ENCODE measurements at regions of chr1 and their contacts with region 1.

Region 1: DNA sequence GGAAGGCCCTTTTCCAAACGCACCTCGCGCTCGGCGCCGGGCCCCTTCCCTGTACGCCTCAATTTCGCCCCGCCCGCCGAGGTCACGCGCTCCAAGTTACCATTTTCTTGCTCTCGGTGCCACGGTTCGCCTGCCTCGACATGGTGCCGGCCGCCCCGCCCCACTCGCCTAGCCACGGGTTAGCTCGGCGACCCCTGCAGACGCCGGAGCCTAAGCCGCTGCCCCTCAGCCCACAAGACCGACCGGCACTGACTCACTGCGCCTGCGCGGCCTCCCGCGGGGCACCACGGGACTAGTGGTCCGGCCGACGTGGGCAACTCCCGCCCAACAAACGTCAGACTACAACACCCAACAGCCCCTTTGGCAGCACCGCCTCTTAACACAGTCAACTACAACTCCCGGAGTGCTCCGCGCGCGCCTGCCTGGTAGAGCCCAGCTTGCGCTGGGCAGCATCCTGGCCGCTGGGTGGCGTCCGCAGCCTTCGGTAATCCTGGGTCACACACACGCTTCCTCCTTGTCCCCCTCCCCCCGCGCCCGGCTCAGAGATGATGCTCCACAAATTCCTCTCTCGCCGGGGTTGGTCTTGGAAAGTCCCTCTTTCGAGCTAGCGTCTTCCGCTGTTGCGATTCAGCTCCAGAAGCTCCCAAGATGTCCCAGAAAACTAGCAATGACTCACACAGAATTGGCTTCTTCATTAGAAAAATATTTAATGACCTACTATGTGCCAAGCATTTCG is at the start of gene TRAPPC3:
- DNase-seq: peak; percentile 100
- H3K4me3 Mint-ChIP-seq: peak within 1 kb of the TSS; percentile 98
- H3K27ac Mint-ChIP-seq: peak within 1 kb of the TSS; percentile 93
- H3K4me1 Mint-ChIP-seq: peaks cover 66% of the 10 kb centered on the region
- H3K27me3 Mint-ChIP-seq: no peaks in the 10 kb centered on the region
- total RNA-seq, gene TRAPPC3: 57.2 to 58.4 TPM

Region 2: GRCh38 chr1:36070349-36070748 is 79.1 kb before region 1 on chr1:
- CTCF ChIA-PET with region 1: no interaction called
- POLR2A ChIA-PET with region 1: no interaction called
- DNase-seq: no peak
- H3K4me3 Mint-ChIP-seq: no peak overlapping the region
- H3K27ac Mint-ChIP-seq: no peak overlapping the region
- H3K4me1 Mint-ChIP-seq: peaks cover 2% of the 10 kb centered on the region
- H3K27me3 Mint-ChIP-seq: no peaks in the 10 kb centered on the region

Region 3: DNA sequence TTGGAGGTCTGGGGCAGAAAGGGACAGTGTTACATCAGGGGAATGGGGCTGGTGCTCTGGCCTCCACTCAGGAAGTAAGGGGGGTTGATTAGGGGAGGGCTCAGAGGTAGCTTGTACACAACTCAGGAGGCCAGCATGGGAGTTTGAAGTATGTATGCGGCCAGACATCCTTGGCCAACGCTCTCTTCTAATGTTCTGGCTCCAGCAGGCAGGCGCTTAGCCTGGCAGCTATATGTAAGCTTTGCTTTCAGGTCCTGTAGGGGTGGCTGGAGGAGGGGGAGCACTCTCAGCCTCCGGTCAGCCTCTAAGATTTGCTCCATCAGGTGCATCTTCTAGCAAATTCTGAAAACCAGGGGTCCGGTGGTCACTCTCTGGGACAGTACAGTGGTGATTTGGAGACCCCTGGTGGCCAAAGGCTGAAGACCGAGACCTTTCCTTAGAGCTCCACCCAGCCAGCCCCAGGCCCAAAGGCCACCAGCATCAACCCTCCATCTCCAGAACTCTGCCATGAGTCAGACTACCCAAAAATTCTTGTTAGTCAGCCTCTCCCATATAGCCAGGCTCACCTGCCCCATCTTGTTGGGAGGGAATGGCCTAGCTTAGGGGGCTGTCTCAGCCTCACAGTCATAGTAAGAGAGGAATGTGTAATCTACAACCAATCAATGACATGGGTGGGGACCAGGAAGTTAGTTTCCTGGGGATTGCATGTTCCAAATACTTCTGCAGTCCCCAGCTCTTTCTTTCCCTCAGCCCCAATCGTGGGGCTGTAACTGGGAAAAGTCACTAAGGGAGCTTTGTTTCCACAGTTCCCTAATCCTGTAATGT is 14.7 kb before region 1 on chr1:
- CTCF ChIA-PET with region 1: interaction called, 22 read pairs
- POLR2A ChIA-PET with region 1: interaction called, 10 read pairs
- DNase-seq: peak; percentile 41
- H3K4me3 Mint-ChIP-seq: no peak overlapping the region
- H3K27ac Mint-ChIP-seq: no peak overlapping the region
- H3K4me1 Mint-ChIP-seq: peaks cover 8% of the 10 kb centered on the region
- H3K27me3 Mint-ChIP-seq: no peaks in the 10 kb centered on the region

Region 4: DNA sequence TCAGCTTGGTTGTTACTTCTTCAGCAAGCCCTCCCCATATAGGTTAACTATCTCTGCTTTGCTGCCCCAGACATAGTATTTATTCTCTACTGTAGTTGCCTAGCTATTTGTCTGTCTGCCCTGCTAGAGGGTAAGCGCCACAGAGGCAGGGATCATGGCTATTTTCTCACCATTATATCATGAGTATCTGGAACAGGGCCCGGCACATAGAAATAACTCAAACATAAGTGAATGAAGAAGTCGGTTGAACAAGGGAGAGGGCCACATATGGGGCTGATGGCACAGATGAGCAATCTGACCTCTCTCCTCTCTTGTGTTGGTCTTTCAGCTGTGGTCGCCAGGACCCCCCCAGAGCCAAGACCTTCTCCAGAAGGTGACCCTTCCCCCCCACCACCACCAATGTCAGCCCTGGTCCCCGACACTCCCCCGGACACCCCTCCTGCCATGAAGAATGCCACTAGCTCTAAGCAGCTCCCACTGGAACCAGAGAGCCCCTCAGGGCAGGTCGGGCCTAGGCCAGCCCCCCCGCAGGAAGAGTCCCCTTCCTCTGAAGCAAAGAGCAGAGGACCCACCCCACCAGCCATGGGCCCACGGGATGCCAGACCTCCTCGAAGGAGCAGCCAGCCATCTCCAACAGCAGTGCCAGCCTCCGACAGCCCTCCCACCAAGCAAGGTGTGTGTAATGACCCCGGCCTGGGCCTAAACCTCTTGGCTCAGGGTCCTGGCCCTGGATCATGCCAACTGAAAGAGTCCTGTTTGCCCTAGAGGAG is 21.4 kb after region 1 on chr1:
- CTCF ChIA-PET with region 1: interaction called, 4 read pairs
- POLR2A ChIA-PET with region 1: interaction called, 193 read pairs
- DNase-seq: no peak
- H3K4me3 Mint-ChIP-seq: no peak overlapping the region
- H3K27ac Mint-ChIP-seq: no peak overlapping the region
- H3K4me1 Mint-ChIP-seq: peaks cover 19% of the 10 kb centered on the region
- H3K27me3 Mint-ChIP-seq: no peaks in the 10 kb centered on the region

Region 5: DNA sequence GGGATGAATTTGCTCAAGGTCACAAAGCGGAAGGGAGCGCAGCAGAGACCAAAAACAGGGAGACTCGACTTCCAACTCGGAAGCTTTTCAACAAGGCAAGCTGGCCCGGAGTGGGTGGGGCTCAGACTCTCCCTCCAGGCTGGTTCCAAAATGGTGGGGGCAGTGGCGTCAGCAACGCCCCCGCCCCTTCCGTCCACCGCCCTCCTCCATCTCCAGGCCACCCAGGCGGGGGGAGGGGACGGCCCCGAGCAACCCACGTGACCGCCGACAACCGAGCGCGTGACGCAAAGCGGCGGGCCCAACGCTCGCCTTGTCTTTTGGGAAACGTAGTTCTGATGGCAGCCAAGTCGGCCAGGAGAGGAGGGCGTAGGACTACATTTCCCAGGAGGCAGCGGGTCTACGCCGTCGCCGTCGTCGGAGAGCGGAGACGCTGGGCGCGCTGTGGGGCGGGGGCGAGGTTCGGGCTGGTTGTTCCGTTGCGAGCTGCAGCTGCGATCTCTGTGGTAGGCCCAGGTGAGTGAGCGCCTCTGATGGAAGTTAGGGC is 74.7 kb after region 1 on chr1 and contains the start of gene THRAP3:
- CTCF ChIA-PET with region 1: interaction called, 46 read pairs
- POLR2A ChIA-PET with region 1: interaction called, 54 read pairs
- DNase-seq: peak; percentile 100
- H3K4me3 Mint-ChIP-seq: peak within 1 kb of the TSS; percentile 94
- H3K27ac Mint-ChIP-seq: peak within 1 kb of the TSS; percentile 99
- H3K4me1 Mint-ChIP-seq: peaks cover 32% of the 10 kb centered on the region
- H3K27me3 Mint-ChIP-seq: no peaks in the 10 kb centered on the region
- total RNA-seq, gene THRAP3: 128 to 133 TPM

Region 6: GRCh38 chr1:36285448-36286101 is 136.2 kb after region 1 on chr1:
- CTCF ChIA-PET with region 1: interaction called, 54 read pairs
- POLR2A ChIA-PET with region 1: interaction called, 16 read pairs
- DNase-seq: peak; percentile 65
- H3K4me3 Mint-ChIP-seq: no peak overlapping the region
- H3K27ac Mint-ChIP-seq: peak overlapping the region; percentile 61
- H3K4me1 Mint-ChIP-seq: peaks cover 21% of the 10 kb centered on the region
- H3K27me3 Mint-ChIP-seq: no peaks in the 10 kb centered on the region

Region 7: GRCh38 chr1:36369061-36369861 is 219.9 kb after region 1 on chr1:
- CTCF ChIA-PET with region 1: interaction called, 14 read pairs
- POLR2A ChIA-PET with region 1: no interaction called
- DNase-seq: peak; percentile 86
- H3K4me3 Mint-ChIP-seq: no peak overlapping the region
- H3K27ac Mint-ChIP-seq: peak overlapping the region; percentile 56
- H3K4me1 Mint-ChIP-seq: peaks cover 72% of the 10 kb centered on the region
- H3K27me3 Mint-ChIP-seq: no peaks in the 10 kb centered on the region

Region 8: DNA sequence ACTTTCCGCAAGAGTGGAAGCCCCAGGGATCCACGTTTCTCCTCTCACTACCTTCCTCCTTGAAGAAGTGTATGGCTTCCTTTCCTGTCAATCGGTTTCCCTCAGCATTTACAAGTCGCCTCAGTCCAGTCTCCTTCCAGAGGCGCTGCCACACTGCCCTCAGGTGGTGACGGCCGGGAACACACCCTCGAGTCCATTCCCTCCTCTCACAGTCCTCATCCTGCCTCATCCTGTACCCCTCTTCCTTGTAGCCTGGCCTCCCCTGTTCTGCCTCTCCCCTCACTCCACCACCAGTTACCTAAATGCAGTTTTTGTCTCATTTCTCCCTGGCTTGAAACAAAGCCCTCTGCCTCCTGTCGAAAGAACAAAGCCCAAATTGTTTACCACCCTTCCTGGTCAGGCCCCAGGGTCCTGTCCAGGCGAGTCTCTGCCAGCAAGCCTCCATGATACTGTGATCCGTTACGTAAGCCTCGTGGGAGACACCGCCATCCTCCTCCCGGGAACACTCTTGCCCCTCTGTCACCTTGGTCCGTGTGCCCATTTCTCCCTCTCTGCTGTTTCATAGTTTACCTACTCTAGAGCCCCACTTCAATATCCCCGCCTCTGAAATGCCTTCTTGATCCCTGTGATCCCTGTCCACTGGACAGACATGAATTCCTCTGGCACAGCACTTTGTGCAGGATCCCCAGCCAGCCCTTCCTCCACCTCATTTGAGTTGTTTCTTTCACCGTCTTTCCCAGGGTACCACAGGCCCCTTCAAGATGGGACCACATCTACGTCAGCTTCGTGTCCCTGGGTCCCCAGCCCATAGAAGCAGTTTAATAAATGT is 271.6 kb after region 1 on chr1:
- CTCF ChIA-PET with region 1: interaction called, 10 read pairs
- POLR2A ChIA-PET with region 1: interaction called, 3 read pairs
- DNase-seq: peak; percentile 93
- H3K4me3 Mint-ChIP-seq: no peak overlapping the region
- H3K27ac Mint-ChIP-seq: peak overlapping the region; percentile 73
- H3K4me1 Mint-ChIP-seq: peaks cover 20% of the 10 kb centered on the region
- H3K27me3 Mint-ChIP-seq: no peaks in the 10 kb centered on the region

Measured in activated CD4-positive, alpha-beta memory T cell treated with anti-CD3 and anti-CD28 coated beads, Interleukin-2, amount 10 ng/mL, durations not matched to agents 7 days and 5 days (primary cell).